ENCODE measurements at regions of chr3 and their contacts with region 1.

Region 1: GRCh38 chr3:32947789-32948238 is 3.6 kb upstream of the CCR4 start:
- DNase-seq: peak; percentile 99
- H3K4me3 Mint-ChIP-seq: no peak overlapping the region
- H3K27ac Mint-ChIP-seq: no peak overlapping the region
- H3K4me1 Mint-ChIP-seq: peaks cover 38% of the 10 kb centered on the region
- H3K27me3 Mint-ChIP-seq: no peaks in the 10 kb centered on the region

Region 2: GRCh38 chr3:32992322-32992692 is 44.5 kb after region 1 on chr3:
- CTCF ChIA-PET with region 1: interaction called, 3 read pairs
- intact Hi-C with region 1: loop called (anchors 1 kb)
- DNase-seq: no peak
- H3K4me3 Mint-ChIP-seq: peak overlapping the region; percentile 31
- H3K27ac Mint-ChIP-seq: peak overlapping the region; percentile 84
- H3K4me1 Mint-ChIP-seq: peaks cover 54% of the 10 kb centered on the region
- H3K27me3 Mint-ChIP-seq: peaks cover 2% of the 10 kb centered on the region

Region 3: DNA sequence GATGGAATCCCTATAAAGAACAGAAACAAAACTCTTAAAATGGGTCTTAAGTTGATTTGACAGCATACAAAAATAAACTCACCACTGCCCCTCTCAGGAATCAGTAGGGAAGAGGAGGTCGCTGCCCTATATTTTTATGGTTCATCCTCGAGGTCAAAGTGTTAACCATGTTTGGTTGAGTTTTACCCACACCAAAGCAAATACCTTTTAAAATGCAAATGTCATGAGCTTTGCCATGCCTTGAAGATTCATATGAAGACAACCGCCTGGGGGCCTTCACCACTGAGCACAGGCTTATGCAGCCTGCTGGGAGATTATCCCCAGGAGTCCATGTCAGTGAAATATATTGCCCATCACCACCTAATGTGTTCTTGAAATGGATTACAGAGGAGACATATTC is 83.0 kb after region 1 on chr3:
- CTCF ChIA-PET with region 1: interaction called, 26 read pairs
- intact Hi-C with region 1: loop called (anchors 1 kb)
- DNase-seq: peak; percentile 56
- H3K4me3 Mint-ChIP-seq: no peak overlapping the region
- H3K27ac Mint-ChIP-seq: no peak overlapping the region
- H3K4me1 Mint-ChIP-seq: peaks cover 15% of the 10 kb centered on the region
- H3K27me3 Mint-ChIP-seq: no peaks in the 10 kb centered on the region

Region 4: GRCh38 chr3:33096093-33096868 is 148.5 kb after region 1 on chr3:
- CTCF ChIA-PET with region 1: interaction called, 3 read pairs
- intact Hi-C with region 1: loop called (anchors 2 kb)
- DNase-seq: peak; percentile 68
- H3K4me3 Mint-ChIP-seq: peak overlapping the region; percentile 98
- H3K27ac Mint-ChIP-seq: peak overlapping the region; percentile 88
- H3K4me1 Mint-ChIP-seq: peaks cover 41% of the 10 kb centered on the region
- H3K27me3 Mint-ChIP-seq: no peaks in the 10 kb centered on the region

Region 5: GRCh38 chr3:33717866-33718594 is 770.2 kb after region 1 on chr3 and contains the start of gene CLASP2:
- CTCF ChIA-PET with region 1: no interaction called
- intact Hi-C with region 1: loop called (anchors 2 kb)
- DNase-seq: peak; percentile 83
- H3K4me3 Mint-ChIP-seq: peak within 1 kb of the TSS; percentile 86
- H3K27ac Mint-ChIP-seq: peak within 1 kb of the TSS; percentile 91
- H3K4me1 Mint-ChIP-seq: peaks cover 10% of the 10 kb centered on the region
- H3K27me3 Mint-ChIP-seq: no peaks in the 10 kb centered on the region
- total RNA-seq, gene CLASP2: 40.4 to 41.4 TPM